T-cell (primary cell): ENCODE measurements at regions of chr4 and their contacts with region 1.

Region 1: DNA sequence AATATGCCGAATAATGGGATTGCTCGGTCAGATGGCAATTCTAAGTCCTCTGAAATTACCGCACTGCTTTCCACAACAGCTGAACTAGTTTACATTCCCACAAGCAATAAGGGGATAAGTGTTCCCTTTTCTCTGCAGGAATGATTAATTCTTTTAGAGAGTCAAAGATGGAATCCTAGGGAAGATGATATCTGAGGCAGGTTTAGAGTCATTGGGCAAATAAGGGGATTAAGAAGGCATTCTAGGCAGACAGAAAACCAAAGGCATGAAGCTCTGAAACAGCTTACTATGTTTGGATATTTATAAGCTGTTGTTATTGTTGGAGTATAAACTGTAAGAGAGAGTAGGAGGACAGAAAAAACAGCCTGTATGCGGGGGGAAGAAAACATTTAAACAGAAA is 85.7 kb downstream of the TET2 start:
- DNase-seq: no peak
- ATAC-seq: no peak
- H3K4me3 ChIP-seq: no peak overlapping the region
- H3K4me3 Mint-ChIP-seq: no peak overlapping the region
- H3K27ac ChIP-seq: no peak overlapping the region
- H3K27ac Mint-ChIP-seq: no peak overlapping the region
- H3K4me1 ChIP-seq: no peaks in the 10 kb centered on the region
- H3K4me1 Mint-ChIP-seq: peaks cover 9 to 21% (median 14%) of the 10 kb centered on the region in 3 donors
- H3K27me3 ChIP-seq: no peaks in the 10 kb centered on the region
- H3K27me3 Mint-ChIP-seq: no peaks in the 10 kb centered on the region

Region 2: GRCh38 chr4:105147553-105148161 is 84.7 kb before region 1 on chr4:
- CTCF ChIA-PET with region 1: no interaction called
- POLR2A ChIA-PET with region 1: interaction called in 1 of 2 experiments, 19 read pairs
- DNase-seq: peak in 16 of 35 experiments; percentile 2 to 40 (median 10)
- ATAC-seq: no peak
- H3K4me3 ChIP-seq: peak overlapping the region; percentile 87 to 99
- H3K4me3 Mint-ChIP-seq: peak overlapping the region; percentile 99 to 100 (median 99)
- H3K27ac ChIP-seq: peak overlapping the region; percentile 79
- H3K27ac Mint-ChIP-seq: peak overlapping the region; percentile 94 to 95
- H3K4me1 ChIP-seq: peaks cover 7 to 14% of the 10 kb centered on the region in 2 experiments
- H3K4me1 Mint-ChIP-seq: peaks cover 41 to 60% (median 41%) of the 10 kb centered on the region in 3 donors
- H3K27me3 ChIP-seq: no peaks in the 10 kb centered on the region
- H3K27me3 Mint-ChIP-seq: no peaks in the 10 kb centered on the region